ENCODE measurements at regions of chr3 and their contacts with region 1.

Region 1: DNA sequence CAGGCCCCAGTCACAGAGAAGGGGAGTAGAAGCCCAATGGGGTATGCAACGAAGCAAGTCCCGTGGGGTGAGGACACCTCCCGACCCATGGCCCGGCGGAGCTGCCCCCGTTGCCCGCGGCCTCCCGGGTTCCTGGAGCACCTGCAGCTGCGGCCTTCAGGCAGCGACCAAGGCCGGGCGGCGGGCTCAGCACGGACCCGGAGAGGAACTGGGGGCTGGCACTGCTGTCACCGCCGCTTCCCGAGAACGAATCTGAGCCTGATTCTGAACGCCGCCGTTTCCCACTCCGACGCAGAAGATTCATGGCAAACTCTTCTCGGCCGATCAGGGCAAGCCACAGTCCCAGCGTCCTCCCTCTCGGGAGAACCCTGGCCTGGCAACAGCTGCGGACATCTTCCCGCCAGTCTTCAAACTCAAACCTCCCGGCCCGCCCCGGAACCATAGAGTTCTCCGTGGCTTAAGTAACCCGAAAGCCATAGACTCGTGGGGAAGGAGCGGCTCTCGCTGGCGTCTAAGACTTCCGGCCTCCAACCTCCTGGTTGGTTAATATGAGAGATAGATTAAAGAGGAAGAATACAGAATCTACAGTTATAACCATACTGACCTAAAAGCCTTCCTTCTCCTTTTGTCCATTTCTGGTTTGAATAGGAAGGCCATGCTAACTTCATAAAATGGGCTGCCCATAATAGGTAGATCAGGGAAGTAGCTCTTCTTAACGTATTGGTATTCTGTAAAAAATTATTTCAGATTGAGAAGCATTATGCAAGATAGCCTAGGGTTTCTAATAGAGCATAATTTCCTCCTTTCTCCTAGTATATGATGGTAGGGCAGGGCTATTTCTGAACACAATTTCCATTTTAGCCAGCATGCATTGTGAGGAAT is at the start of gene POLQ:
- H3K4me3 Mint-ChIP-seq: peak within 1 kb of the TSS; percentile 83
- H3K27ac Mint-ChIP-seq: peak within 1 kb of the TSS; percentile 91
- H3K4me1 Mint-ChIP-seq: peaks cover 12% of the 10 kb centered on the region
- H3K27me3 Mint-ChIP-seq: no peaks in the 10 kb centered on the region

Region 2: DNA sequence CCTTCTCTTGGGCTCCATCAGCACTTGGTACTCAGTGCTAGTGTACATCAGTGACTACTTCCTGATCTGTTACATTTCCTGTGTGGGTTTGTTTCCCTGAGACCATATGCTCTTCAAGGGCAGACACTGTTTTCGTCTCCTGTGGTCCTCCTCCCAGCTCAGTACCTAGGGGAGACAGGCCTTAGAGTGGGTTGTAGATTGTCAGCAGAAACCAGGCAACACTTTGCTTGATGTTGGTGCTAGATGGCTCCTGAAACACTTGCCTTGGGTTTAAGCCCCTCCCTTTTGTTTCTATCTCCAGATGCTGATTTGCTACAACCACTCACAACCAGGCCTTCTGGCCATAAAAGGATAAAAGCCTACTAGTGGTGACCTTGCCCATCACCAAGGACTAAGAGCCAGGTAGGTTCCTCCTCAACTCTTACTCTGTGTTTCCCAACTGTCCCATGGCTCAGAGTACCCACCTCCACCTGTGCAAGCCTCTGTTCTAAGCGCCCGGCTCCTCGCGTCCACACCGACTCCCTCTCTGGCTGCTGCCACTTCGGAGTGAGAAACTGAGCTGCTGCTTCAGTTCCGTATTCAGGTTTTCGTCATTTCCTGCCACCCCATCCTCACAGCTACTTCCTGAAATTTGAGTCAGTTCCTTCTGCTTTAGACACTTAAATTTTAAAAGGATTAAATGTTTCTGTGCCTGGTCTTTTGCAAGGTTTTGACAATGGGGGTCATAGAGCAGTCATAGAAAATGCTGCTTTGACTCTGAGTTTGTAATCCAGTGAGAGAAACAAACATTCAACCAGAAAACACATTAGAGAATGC is 114.7 kb after region 1 on chr3 and contains the start of gene HCLS1:
- intact Hi-C with region 1: loop called (anchors 2 kb)
- H3K4me3 Mint-ChIP-seq: peak within 1 kb of the TSS; percentile 89
- H3K27ac Mint-ChIP-seq: peak within 1 kb of the TSS; percentile 98
- H3K4me1 Mint-ChIP-seq: peaks cover 70% of the 10 kb centered on the region
- H3K27me3 Mint-ChIP-seq: no peaks in the 10 kb centered on the region

Region 3: DNA sequence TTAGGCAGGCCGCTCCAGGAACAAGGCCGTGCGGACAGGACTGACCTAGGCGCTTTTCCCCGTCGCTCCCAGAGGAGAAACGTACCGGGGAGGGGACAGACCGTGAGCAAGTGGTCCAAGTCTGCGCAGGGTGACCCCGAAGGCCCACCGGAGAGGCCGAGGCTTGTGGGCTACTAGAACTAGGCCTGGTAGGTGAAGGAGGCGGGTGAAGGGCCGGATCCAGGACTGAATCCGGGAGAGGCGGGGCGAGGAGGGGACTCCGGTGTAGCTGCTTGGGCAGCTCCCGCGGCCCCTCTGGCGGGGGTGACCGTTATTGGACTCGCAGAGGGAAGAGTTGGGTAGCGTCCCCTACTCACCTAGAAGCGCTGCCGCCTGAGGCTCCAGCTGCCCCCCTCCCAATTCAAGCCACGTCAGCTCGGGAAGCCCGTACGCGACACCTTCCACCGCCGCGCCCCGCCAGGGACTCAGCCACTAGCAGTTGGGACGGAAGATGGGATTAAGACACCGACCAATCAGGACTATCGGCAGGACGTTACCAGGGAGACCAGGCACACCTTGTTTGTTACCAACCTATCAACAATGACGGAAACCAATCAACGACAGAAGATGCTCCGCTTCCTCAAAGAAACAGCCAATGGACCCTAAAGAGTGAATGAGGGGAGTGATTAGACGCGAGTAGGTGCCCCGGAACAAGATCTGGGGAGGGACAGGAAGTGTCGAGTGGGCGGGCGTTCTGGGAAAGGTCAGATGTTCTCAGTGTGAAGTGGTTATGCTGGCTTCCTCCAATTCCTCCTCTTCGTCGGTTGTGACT is 203.7 kb after region 1 on chr3 and contains the start of gene GOLGB1:
- intact Hi-C with region 1: loop called (anchors 10 kb)
- H3K4me3 Mint-ChIP-seq: no peak within 1 kb of the TSS
- H3K27ac Mint-ChIP-seq: no peak within 1 kb of the TSS
- H3K4me1 Mint-ChIP-seq: peaks cover 7% of the 10 kb centered on the region
- H3K27me3 Mint-ChIP-seq: peaks cover 10% of the 10 kb centered on the region

Region 4: DNA sequence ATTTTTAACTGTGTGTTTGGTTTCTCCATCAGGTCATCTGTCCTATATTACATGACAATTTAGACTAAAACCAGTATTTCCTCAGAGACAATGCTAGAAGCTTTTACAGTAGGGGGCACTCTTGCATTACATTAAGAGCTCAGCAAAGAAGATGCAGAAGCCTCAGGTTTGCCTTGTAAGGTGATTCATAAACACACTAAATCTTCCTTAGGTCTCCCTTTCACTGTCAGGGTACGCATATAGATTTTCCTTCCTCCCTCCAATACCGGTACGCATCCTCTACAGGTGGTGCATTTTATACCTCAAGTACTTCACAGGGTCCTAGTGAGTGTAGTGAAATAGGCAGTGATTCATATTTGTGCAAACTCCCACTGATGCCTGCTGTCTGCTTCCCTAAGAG is 555.8 kb after region 1 on chr3:
- intact Hi-C with region 1: loop called (anchors 2 kb)
- H3K4me3 Mint-ChIP-seq: no peak overlapping the region
- H3K27ac Mint-ChIP-seq: peak overlapping the region; percentile 57
- H3K4me1 Mint-ChIP-seq: peaks cover 22% of the 10 kb centered on the region
- H3K27me3 Mint-ChIP-seq: no peaks in the 10 kb centered on the region

Region 5: DNA sequence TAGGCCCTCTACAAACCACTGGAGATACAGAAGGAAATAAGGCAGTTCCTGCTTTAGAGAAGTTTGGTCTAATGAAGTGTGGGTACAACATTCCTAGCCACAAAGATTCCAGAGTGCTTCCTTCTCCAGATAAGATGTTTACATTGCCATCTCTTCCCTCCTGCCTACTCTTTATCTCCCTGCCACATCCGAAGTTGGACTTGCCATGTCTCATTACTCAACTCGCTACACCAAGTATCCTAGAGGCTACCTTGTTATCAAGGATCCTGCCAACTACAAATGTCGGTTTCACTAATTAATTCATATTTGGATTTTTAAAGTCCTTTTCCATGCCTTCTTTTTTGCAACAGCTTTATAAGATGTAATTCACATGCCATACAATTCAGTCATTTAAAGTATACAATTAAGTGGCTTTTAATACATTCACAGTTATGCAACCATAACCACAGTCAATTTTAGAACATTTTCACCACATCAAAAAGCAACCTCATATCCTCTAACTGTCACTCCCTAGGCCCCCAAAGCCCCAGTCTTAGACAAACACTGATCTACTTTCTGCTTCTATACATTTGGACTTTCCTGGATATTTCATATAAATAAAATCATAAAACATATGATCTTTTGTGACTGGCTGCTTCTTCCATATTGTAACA is 725.6 kb after region 1 on chr3:
- intact Hi-C with region 1: loop called (anchors 10 kb)
- H3K4me3 Mint-ChIP-seq: no peak overlapping the region
- H3K27ac Mint-ChIP-seq: no peak overlapping the region
- H3K4me1 Mint-ChIP-seq: peaks cover 40% of the 10 kb centered on the region
- H3K27me3 Mint-ChIP-seq: no peaks in the 10 kb centered on the region